GM10248 (cell line): ENCODE measurements at regions of chr6 and their contacts with region 1.

Region 1: DNA sequence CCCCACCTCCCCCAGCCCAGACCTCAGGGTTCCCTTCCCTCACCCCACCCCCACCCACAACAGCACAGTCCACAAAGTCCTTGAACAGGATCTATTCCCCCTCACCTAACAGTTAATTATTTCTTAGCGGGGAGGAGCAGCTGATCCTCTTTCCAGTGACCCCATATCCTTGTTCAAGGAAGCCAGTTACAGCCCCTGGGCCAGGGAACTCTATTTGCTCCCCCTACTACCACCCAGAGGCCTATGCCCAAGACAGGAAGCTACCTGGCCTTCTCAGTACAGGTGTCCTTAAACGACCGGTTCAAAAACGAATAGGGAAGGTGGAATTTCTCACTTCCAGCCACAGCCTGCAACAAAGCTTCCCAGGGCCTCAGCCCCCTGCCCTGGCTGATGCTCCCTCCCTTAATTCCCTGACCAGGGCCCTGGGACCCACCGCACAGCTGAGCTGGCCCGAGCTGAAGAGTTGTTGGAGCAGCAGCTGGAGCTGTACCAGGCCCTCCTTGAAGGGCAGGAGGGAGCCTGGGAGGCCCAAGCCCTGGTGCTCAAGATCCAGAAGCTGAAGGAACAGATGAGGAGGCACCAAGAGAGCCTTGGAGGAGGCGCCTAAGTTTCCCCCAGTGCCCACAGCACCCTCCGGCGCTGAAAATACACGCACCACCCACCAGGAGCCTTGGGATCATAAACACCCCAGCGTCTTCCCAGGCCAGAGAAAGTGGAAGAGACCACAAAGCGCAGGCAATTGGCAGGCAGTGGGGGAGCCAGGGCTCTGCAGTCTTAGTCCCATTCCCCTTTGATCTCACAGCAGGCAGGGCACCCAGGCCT is 778 bp downstream of the MCCD1 start:
- DNase-seq: no peak
- CTCF ChIP-seq: no peak

Region 2: DNA sequence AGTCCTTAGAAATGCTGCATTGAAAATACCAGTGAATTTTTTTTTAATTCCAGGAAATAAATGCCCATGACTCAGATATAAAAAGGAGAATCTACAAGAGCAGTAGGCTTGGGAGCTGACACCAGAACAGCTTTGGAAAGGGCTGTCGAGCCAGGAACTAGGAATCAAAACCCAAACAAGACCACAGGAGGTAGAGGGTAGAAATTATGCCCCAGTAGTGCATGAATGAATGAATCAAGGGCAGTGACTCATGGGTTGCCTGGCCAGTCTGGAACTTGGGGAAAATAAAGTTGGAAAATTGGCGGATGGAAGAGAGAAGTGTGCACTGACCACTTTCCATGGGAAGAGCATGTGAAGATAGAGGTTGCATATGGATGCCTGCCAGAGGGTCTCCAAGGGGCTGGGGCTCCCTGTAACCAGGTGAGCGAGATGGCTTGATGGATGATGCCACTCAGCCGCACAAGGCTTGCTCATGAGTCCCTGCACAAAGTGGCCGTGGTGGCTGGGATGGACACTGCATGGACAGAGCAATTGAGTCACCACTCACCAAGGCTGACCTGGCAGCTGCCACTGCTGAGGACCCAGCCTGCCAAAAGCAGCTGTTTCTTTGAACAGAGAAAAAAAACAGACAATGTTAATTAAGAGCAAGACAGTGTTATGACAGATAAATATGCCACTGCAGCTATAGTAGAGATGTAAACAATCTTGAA is 15.9 kb before region 1 on chr6:
- CTCF ChIA-PET with region 1: interaction called, 3 read pairs
- POLR2A ChIA-PET with region 1: interaction called, 10 read pairs
- DNase-seq: no peak
- CTCF ChIP-seq: no peak

Region 3: DNA sequence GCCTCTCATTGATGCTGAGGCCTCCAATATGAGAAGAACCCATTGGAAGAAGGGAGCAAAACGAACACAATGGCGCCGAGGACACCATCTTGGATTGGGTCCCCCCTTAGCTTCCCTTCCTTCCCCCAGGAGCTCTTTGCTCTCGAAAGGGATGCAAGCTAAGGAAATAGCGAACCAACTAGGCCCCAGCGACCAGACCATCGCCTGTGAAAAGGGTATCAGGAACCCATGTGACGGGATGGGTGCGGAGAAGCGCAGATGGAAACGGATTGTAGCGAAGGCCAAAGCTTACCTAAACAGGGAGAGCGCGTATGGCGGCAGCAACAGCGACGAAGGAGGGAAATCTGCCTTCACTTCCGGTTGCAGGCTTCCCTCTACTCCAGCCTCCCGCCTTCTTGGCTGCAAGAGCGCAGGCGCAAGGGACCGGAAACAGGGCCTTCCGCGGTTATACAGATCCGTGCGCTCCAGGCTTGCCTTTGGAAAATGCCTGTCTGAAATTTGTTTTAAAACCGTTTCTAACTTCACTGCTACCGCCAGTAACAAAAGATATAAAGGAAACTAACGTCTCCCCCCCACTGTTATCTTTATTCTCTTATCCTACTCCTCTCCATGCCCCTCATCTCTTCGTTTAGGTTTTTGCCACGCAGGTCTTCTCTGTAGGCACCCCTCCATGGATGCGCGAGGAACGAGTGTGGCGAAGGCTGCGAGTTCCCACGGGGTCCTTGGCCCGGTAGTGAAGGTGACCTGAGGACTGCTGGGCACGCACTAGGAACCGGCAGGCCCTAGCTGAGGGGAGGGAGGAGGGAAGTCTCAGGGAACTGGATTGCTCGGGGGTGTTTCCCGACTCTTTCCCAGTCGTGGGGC is 12.3 kb after region 1 on chr6 and contains the start of gene DDX39B:
- CTCF ChIA-PET with region 1: interaction called, 9 read pairs
- POLR2A ChIA-PET with region 1: interaction called, 14 read pairs
- DNase-seq: peak; percentile 92
- CTCF ChIP-seq: no peak

Region 4: GRCh38 chr6:33254591-33254990 is 1725.1 kb after region 1 on chr6:
- CTCF ChIA-PET with region 1: no interaction called
- POLR2A ChIA-PET with region 1: interaction called, 11 read pairs
- DNase-seq: no peak
- CTCF ChIP-seq: no peak